AG04450 (cell line): ENCODE measurements at regions of chrX and their contacts with region 1.

Region 1: DNA sequence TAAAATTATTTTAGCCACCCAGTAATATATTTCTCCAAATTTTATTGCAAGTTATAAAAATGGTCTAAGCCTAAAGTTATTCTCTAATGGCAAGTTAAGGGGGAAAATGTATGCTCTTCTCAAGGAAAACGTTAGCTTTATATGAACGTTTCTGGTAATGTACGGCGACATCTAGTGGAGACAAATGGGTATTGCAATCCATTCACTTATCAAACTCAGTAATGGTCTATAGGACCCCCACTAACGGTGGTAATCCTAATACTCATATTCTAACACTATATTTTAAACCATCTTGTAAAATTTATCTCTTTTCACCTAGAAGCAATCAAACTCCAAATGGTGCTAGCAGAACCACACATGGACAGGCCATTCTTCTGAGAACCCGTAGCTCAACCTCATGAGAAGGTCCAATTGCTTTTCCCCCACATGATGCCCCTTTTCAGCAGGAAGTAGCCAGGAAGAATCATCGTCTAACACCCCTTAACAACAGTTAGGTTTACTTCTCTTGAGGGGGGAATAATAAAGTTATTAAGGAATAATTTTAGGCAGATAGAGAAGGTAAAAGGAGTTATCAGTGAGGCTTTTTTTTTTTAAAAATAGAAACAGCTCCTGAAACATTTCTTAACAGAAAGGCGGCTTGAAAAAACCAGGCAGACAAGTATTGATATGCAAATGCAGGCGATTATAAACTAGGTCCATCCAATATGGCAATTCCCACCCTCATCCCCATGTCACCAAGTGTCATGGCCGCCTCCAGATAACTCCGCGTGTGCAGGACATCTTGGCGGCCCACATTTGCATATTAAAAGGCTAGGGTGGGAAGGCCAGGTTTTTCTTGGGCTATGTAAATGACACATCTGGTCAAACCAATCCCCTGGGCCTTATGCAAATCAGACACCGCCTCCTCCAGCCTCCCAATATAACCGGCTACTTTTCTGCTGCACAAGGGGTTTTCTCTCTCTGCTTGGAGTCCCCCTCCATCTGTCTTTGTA is 35.0 kb downstream of the NUDT11 start:
- DNase-seq: peak; percentile 2
- H3K4me3 ChIP-seq: no peak overlapping the region
- H3K27ac ChIP-seq: no peak overlapping the region
- H3K27me3 ChIP-seq: peaks cover 2% of the 10 kb centered on the region
- CTCF ChIP-seq: peak; percentile 68

Region 2: GRCh38 chrX:51336584-51336983 is 124.8 kb before region 1 on chrX:
- CTCF ChIA-PET with region 1: interaction called, 28 read pairs
- POLR2A ChIA-PET with region 1: no interaction called
- DNase-seq: no peak
- H3K4me3 ChIP-seq: no peak overlapping the region
- H3K27ac ChIP-seq: no peak overlapping the region
- H3K27me3 ChIP-seq: no peaks in the 10 kb centered on the region
- CTCF ChIP-seq: peak; percentile 57

Region 3: GRCh38 chrX:51476930-51477329 is 15.6 kb after region 1 on chrX:
- CTCF ChIA-PET with region 1: interaction called, 36 read pairs
- POLR2A ChIA-PET with region 1: no interaction called
- DNase-seq: no peak
- H3K4me3 ChIP-seq: no peak overlapping the region
- H3K27ac ChIP-seq: no peak overlapping the region
- H3K27me3 ChIP-seq: no peaks in the 10 kb centered on the region
- CTCF ChIP-seq: no peak